ENCODE measurements at regions of chr9 and their contacts with region 1.

Region 1: DNA sequence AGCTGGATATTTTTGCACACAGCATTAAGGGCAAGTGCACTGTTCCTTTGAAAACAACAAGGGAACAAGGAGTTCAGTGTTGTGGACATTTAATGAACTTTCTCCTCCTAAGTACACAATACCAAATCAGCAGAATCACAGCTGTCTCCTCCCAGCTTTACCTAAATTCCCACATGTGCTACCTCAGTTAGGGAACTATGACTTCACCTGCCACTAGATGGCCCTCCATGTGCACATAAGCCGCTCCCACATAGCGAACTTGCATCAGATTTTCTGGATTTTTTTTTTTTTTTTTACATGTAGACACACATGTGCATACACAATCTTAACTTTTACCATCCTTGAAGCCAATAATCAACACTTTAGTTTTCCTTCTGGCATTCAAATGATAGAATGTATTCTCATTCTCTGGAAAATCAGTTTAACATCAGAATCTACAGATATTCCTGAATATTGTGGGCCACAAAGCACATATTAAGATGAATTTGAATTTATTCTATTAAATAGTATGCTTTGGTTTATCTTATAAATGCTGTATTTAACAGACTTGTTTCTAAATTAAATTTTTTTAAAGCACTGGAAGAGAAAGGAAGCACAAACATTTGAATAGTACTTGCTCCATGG is 123.6 kb downstream of the PALM2AKAP2 start:
- DNase-seq: peak in 5 of 10 donors; percentile 58 to 92 (median 59)

Region 2: DNA sequence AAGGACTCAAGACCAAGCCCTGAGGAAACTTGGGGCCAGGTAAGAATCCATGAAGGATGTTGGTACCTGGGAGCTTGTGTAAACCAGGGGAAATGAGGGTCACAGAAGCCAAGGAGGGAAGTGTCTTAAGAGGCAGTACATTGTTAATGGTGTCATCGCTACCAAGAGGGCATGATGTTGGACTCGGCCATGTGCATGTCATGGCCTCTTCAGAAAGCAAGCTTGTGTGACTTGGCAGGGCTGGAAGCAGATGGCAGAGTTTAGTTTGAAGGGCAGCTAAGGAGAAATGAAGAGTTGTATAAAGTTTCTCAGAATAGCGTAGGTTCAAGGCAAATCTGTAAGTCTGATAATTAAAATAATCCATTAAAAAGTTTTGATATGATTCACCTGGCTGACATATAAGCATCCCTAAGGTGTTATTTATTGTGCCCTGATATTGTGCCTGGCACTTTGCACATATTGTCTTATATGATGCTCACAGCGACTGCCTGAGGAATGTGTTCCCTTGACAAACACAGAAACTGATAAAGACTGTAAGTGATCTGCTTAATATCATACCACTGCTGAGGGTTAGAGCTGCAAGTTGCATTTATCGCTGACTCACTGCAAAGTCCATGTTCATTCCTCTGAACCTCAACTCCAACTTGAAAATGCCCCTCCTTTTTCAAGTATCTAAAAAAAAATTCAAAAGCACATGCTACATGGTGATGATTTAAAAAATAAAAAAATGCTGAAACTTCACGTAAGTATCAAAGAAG is 324.3 kb before region 1 on chr9:
- intact Hi-C with region 1: loop called (anchors 5 kb)
- DNase-seq: no peak

Region 3: DNA sequence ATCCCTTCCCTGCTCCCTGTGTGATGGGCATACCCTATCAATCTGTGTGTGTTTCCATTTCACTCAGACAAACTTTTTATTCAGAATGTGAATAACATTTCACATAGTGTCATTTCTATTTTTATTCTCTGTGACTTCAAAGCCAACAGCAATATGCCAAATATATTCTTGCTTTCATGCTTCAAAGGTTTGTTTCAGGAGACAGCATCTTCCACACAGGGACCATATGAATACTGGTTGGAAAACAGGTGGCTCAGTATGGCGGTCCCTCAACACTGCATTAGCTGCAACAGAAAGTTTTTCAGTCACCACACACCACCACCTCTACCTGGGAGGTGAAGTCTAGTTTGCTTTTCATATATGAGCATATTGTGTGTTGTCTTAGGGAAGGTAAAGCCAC is 294.6 kb before region 1 on chr9:
- intact Hi-C with region 1: no loop called
- DNase-seq: no peak

Region 4: GRCh38 chr9:109859433-109859832 is 44.2 kb before region 1 on chr9:
- intact Hi-C with region 1: no loop called
- DNase-seq: no peak

Region 5: GRCh38 chr9:109875495-109876129 is 28.0 kb before region 1 on chr9:
- intact Hi-C with region 1: no loop called
- DNase-seq: no peak

Region 6: GRCh38 chr9:110058304-110058953 is 154.8 kb after region 1 on chr9:
- intact Hi-C with region 1: loop called (anchors 1 kb)
- DNase-seq: peak in 5 of 10 donors; percentile 11 to 67 (median 38)

Region 7: DNA sequence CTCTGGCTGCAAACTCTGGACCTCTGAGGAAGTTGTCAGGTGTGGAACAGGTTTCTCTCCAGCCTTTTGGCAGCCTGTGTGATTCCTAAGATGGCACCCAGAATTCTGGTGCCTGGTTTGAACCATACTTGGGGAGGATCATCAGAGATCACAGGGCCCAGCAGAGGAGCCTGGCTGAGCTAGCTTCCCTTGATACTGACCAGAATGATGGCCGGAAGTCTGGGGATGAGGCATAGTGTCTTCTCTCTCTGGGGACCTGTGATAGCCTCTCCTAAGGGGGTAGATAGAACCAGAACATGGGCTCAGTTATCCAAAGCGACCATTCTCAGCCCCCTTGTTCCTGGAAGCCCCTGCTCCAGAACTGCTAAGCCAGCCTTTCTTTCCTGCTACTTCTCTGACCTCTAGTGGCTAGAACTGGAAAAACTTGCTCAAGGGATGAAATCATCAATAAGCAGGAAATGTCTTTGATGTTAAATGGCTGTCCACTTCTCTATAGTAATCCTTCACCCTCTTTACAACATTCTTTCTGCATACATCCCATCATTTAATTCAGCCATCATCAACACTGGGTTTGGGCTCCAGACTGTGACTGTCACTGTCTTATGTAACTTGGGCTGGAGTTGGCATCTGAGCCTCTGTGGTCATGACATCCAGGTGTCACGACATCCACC is 249.2 kb after region 1 on chr9:
- intact Hi-C with region 1: loop called (anchors 1 kb)
- DNase-seq: peak in 1 of 10 donors; percentile 27

Region 8: DNA sequence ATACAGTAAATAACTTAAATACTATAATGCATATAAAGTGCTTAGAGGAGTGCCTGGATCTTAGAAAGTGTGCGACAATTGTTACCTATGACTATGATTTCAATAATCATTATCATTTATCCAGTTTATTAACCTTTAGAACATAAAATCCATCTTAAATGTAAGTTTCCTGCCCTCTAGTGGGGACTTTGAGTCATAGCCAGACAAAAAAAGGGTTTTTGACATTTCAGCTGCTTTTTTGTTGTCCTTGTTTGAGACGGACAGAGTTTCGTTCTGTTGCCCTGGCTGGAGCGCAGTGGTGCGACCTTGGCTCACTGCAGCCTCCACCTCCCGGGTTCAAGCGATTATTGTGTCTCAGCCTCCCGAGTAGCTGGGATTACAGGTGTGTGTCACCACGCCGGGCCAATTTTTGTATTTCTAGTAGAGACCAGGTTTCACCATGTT is 314.1 kb after region 1 on chr9:
- intact Hi-C with region 1: loop called (anchors 5 kb)
- DNase-seq: no peak

Measured in posterior cingulate gyrus (tissue), 11 donors.